B cell (primary cell): ENCODE measurements at regions of chr19 and their contacts with region 1.

Region 1: DNA sequence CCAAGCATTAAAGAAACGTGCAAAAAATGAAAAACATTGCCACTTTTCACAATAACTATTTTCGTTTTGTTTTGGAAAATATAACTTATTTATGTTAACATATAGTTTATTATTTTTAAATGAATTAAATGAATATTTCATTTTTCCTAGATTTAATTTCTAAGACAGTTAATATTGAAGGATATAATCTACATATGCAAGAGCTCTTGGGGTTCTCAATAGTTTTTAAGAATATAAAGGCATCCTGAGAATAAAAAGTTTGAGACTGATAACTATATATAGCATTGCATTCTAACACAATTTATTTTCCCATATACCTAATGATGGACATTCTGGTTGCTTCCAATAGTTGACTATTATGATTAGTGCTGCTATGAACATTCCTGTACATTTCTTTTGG is 19.9 kb downstream of the ZNF461 start:
- DNase-seq: no peak
- ATAC-seq: no peak
- H3K4me3 ChIP-seq: no peak overlapping the region
- H3K4me3 Mint-ChIP-seq: no peak overlapping the region
- H3K27ac ChIP-seq: no peak overlapping the region
- H3K27ac Mint-ChIP-seq: no peak overlapping the region
- H3K4me1 ChIP-seq: no peaks in the 10 kb centered on the region
- H3K4me1 Mint-ChIP-seq: no peaks in the 10 kb centered on the region
- H3K27me3 ChIP-seq: no peaks in the 10 kb centered on the region
- H3K27me3 Mint-ChIP-seq: no peaks in the 10 kb centered on the region
- CTCF ChIP-seq: no peak

Region 2: DNA sequence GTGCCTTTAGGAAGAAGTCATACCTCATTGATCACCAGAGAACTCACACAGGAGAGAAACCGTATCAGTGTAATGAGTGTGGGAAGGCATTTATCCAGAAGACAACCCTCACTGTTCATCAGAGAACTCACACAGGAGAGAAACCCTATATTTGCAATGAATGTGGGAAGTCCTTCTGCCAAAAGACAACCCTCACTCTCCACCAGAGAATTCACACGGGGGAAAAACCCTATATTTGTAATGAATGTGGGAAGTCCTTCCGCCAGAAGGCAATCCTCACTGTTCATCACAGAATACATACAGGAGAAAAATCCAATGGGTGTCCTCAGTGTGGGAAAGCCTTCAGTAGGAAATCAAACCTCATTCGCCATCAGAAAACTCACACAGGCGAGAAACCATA is 19.7 kb before region 1 on chr19:
- CTCF ChIA-PET with region 1: no interaction called
- POLR2A ChIA-PET with region 1: no interaction called
- intact Hi-C with region 1: loop called (anchors 2 kb)
- DNase-seq: no peak
- ATAC-seq: no peak
- H3K4me3 ChIP-seq: no peak overlapping the region
- H3K4me3 Mint-ChIP-seq: no peak overlapping the region
- H3K27ac ChIP-seq: no peak overlapping the region
- H3K27ac Mint-ChIP-seq: no peak overlapping the region
- H3K4me1 ChIP-seq: no peaks in the 10 kb centered on the region
- H3K4me1 Mint-ChIP-seq: no peaks in the 10 kb centered on the region
- H3K27me3 ChIP-seq: no peaks in the 10 kb centered on the region
- H3K27me3 Mint-ChIP-seq: no peaks in the 10 kb centered on the region
- CTCF ChIP-seq: no peak

Region 3: GRCh38 chr19:36997152-36997842 is 350.6 kb after region 1 on chr19:
- CTCF ChIA-PET with region 1: no interaction called
- POLR2A ChIA-PET with region 1: no interaction called
- intact Hi-C with region 1: no loop called
- DNase-seq: no peak
- ATAC-seq: no peak
- H3K4me3 ChIP-seq: no peak overlapping the region
- H3K4me3 Mint-ChIP-seq: no peak overlapping the region
- H3K27ac ChIP-seq: no peak overlapping the region
- H3K27ac Mint-ChIP-seq: no peak overlapping the region
- H3K4me1 ChIP-seq: no peaks in the 10 kb centered on the region
- H3K4me1 Mint-ChIP-seq: no peaks in the 10 kb centered on the region
- H3K27me3 ChIP-seq: no peaks in the 10 kb centered on the region
- H3K27me3 Mint-ChIP-seq: no peaks in the 10 kb centered on the region
- CTCF ChIP-seq: no peak